H1 (cell line): ENCODE measurements at regions of chr12 and their contacts with region 1.

Region 1: DNA sequence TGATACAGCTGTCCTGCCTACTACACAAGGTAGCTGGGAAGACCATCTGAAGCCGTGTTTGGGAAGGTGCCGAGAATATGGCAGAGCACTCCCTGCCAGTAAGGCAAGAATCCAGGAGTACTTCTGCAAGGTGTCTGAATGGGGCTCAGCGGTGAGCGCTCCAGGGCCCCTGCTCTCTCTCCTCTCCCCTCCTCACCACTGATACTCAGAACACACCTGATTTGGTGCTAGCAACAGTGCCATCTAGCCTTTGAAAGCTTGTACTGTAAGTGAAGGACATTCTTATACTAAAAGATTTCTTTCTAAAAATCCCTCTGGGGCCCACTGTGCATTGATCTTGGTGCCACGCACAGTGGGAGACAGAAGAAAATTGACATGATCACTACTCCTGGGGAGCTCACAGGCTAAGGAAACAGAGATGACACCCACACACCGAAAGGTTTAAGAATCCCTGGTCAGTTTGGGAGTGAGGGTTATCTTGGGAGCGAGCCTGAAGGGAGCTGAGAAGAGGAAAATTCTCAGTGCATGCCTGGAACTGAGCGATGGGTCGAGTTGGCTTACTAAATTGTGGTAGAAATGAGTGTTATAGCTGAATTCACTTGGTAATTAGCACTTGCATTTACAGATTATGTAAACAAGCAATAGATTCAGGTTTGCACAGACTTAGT is 216.9 kb downstream of the NTF3 start:
- DNase-seq: peak; percentile 43 to 52
- H3K4me3 ChIP-seq: no peak overlapping the region
- H3K27ac ChIP-seq: no peak overlapping the region
- H3K4me1 ChIP-seq: no peaks in the 10 kb centered on the region; a peak in 1 of 7 replicates
- H3K27me3 ChIP-seq: no peaks in the 10 kb centered on the region
- CTCF ChIP-seq: peak in 2 of 3 experiments; percentile 71 to 76; a peak in 3 of 4 replicates
- EP300 ChIP-seq: no peak
- POLR2A ChIP-seq: no peak
- RAD21 ChIP-seq: peak; percentile 81 to 85

Region 2: DNA sequence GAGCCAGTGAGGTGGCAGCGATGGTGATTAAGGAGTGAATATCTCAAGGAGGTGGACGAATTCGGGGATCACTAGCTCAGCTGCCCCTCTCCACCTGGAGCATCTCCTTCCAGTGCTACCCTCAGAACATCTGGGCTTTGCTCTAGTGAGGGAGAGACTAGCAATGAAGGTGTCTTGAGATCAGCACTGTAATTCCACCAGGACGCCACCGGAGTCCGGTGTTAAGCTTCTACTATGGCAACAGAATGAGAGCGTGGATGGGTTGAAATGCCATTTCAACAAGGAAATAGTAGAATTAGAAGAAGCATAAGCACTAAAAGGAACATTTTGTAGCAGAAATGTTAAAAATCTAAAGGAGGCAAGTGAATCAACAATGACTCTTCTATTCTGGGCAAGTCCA is 155.8 kb before region 1 on chr12:
- CTCF ChIA-PET with region 1: interaction called, 13 read pairs
- POLR2A ChIA-PET with region 1: no interaction called
- DNase-seq: no peak
- H3K4me3 ChIP-seq: no peak overlapping the region
- H3K27ac ChIP-seq: no peak overlapping the region
- H3K4me1 ChIP-seq: no peaks in the 10 kb centered on the region; a peak in 1 of 7 replicates
- H3K27me3 ChIP-seq: no peaks in the 10 kb centered on the region
- CTCF ChIP-seq: peak in 2 of 3 experiments; percentile 22 to 48; a peak in 2 of 4 replicates
- EP300 ChIP-seq: no peak
- POLR2A ChIP-seq: no peak
- RAD21 ChIP-seq: peak; percentile 45 to 57

Region 3: GRCh38 chr12:5556039-5556614 is 92.7 kb before region 1 on chr12:
- CTCF ChIA-PET with region 1: interaction called, 29 read pairs
- POLR2A ChIA-PET with region 1: no interaction called
- DNase-seq: peak in 1 of 2 experiments; percentile 88
- H3K4me3 ChIP-seq: no peak overlapping the region
- H3K27ac ChIP-seq: no peak overlapping the region
- H3K4me1 ChIP-seq: peaks cover 0 to 3% (median 0%) of the 10 kb centered on the region in 4 experiments; a peak in 2 of 7 replicates
- H3K27me3 ChIP-seq: no peaks in the 10 kb centered on the region
- CTCF ChIP-seq: peak; percentile 73 to 79 (median 76)
- EP300 ChIP-seq: no peak
- POLR2A ChIP-seq: no peak
- RAD21 ChIP-seq: peak; percentile 64 to 75

Region 4: GRCh38 chr12:5624486-5625272 is 24.1 kb before region 1 on chr12:
- CTCF ChIA-PET with region 1: interaction called, 32 read pairs
- POLR2A ChIA-PET with region 1: no interaction called
- DNase-seq: no peak
- H3K4me3 ChIP-seq: no peak overlapping the region
- H3K27ac ChIP-seq: no peak overlapping the region
- H3K4me1 ChIP-seq: no peaks in the 10 kb centered on the region; a peak in 1 of 7 replicates
- H3K27me3 ChIP-seq: no peaks in the 10 kb centered on the region; a peak in 2 of 7 replicates
- CTCF ChIP-seq: no peak
- EP300 ChIP-seq: no peak
- POLR2A ChIP-seq: no peak
- RAD21 ChIP-seq: no peak

Region 5: GRCh38 chr12:5661811-5662210 is 13.0 kb after region 1 on chr12:
- CTCF ChIA-PET with region 1: interaction called, 20 read pairs
- POLR2A ChIA-PET with region 1: interaction called, 3 read pairs
- DNase-seq: no peak
- H3K4me3 ChIP-seq: no peak overlapping the region
- H3K27ac ChIP-seq: no peak overlapping the region
- H3K4me1 ChIP-seq: no peaks in the 10 kb centered on the region
- H3K27me3 ChIP-seq: no peaks in the 10 kb centered on the region
- CTCF ChIP-seq: no peak
- EP300 ChIP-seq: no peak
- POLR2A ChIP-seq: no peak
- RAD21 ChIP-seq: no peak

Region 6: DNA sequence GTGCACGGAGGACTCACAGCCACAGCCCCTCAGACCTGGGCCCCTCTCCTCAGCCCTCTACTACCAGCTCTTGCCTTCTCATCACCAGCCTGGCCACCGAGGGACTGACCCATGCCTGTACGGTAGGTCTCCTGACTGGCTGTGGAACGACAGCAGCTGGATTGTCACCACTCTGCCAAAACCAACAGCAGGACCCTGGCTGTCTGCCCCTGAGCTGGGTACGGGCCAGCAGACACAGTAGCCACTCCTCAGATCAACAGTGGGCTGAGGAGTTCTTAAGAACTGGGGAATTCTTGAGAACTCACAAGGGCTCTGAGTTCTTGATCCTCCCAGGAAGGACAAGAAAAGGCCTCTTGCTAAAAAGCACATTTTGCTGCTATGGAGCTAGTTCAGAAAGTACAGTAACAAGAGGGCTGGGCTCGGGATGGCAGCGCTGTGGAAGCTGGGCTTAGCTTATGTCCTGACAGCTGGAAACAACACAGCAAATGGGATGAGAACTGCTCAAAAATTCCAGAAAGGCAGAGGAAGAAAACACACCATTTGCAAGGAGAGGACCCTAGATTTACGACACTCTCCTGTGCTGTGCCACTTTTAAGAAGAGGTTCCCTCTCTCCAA is 119.9 kb after region 1 on chr12:
- CTCF ChIA-PET with region 1: no interaction called
- POLR2A ChIA-PET with region 1: no interaction called
- DNase-seq: no peak
- H3K4me3 ChIP-seq: no peak overlapping the region
- H3K27ac ChIP-seq: no peak overlapping the region
- H3K4me1 ChIP-seq: no peaks in the 10 kb centered on the region
- H3K27me3 ChIP-seq: no peaks in the 10 kb centered on the region
- CTCF ChIP-seq: no peak
- EP300 ChIP-seq: no peak
- POLR2A ChIP-seq: no peak
- RAD21 ChIP-seq: no peak